ENCODE measurements at regions of chr17 and their contacts with region 1.

Region 1: DNA sequence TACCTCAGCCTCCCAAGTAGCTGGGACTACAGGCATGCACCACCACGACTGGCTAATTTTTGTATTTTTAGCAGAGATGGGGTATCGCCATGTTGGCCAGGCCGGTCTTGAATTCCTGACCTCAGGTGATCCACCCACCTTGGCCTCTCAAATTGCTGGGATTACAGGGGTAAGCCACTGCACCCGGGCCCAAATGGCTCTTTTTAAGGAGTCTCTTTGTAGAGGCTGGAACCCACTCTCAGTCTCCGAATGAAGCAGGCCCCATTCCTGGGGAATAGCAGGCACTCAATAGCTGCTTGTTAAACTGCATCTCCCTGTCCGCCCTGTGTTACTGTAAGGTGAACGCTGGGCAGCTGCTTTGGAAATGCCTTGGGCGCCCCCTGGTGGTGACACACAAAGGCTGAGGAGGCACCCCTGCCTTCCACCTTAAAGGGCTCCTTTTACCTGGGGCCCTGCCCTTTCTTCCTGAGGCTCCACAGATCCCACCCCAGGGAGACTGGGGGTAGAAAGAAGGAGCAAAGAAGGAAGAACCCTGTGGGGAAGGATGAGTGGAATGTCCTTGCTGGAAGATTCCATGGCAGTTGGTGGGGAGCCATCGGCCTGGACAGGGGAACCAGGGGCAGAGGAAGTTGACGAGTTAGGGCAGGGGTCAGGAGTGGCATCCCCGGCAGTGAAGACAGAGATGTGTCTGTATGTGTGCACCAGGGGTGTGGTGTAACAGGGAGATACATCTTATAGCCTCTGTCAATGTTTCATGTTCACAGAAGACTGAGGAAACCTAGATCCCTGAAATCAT is 6.1 kb upstream of the SP2 start:
- DNase-seq: peak; percentile 71 to 95 (median 87)
- ATAC-seq: peak; percentile 93 to 97 (median 96)
- H3K4me3 ChIP-seq: no peak overlapping the region
- H3K4me3 Mint-ChIP-seq: no peak overlapping the region
- H3K27ac ChIP-seq: no peak overlapping the region
- H3K27ac Mint-ChIP-seq: peak overlapping the region in 1 of 2 donors; percentile 49
- H3K4me1 ChIP-seq: peaks cover 12 to 19% of the 10 kb centered on the region in 2 experiments
- H3K4me1 Mint-ChIP-seq: peaks cover 26 to 31% (median 29%) of the 10 kb centered on the region in 3 donors
- H3K27me3 ChIP-seq: peaks cover 0 to 8% of the 10 kb centered on the region in 2 experiments
- H3K27me3 Mint-ChIP-seq: no peaks in the 10 kb centered on the region

Region 2: DNA sequence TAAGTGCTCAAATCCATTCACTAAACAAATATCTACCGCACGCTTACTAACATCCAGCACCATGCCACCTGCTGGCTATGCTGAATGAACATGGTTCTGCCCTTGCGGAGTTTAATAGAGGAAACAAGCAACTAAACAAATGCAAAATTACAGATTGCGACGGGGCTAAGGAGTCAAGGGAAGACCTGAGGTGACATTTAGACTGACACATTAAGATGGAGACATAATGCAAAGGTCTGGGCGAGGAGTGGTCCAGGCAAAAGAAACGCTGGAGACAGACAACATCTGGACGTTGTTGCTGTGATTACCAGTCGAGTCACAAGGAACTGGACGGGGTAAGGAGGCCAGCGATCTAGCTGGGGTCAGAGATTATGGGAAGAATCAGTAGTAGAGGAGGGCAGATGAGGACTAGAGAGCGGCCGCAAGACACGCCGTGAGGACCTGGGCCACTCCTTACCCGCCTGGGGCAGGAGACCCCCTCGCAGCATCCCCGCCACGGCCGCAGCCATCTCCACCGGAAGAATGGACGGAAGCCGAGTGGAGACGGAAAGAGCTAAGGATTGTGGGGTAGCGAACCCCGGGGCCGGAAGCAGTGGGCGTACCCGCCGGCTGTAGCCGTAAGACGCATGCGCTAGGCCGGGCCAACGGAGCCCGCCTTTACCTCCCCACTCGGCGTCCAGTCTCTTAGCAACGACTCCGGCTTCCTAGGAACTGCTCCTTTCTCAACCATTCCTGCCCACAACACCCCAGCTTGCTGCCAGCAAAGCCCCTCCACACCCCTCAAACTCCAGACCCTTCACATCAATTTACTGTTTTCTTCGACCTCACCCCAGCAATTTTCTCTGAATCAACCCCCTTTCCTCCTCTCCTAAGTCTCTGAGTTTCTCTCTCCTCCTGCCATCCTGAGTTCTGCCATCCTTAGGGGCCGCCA is 58.7 kb before region 1 on chr17 and contains the starts of genes LRRC46 and MRPL10:
- CTCF ChIA-PET with region 1: interaction called in 1 of 2 experiments, 11 read pairs
- POLR2A ChIA-PET with region 1: no interaction called
- DNase-seq: peak; percentile 78 to 95 (median 87)
- ATAC-seq: peak; percentile 82 to 89 (median 87)
- H3K4me3 ChIP-seq: peak within 1 kb of the TSS; percentile 97 to 98
- H3K4me3 Mint-ChIP-seq: peak within 1 kb of the TSS; percentile 92 to 98 (median 94)
- H3K27ac ChIP-seq: peak within 1 kb of the TSS; percentile 99
- H3K27ac Mint-ChIP-seq: peak within 1 kb of the TSS; percentile 96 to 98
- H3K4me1 ChIP-seq: peaks cover 18 to 73% of the 10 kb centered on the region in 2 experiments
- H3K4me1 Mint-ChIP-seq: peaks cover 51 to 69% (median 61%) of the 10 kb centered on the region in 3 donors
- H3K27me3 ChIP-seq: no peaks in the 10 kb centered on the region
- H3K27me3 Mint-ChIP-seq: no peaks in the 10 kb centered on the region
- total RNA-seq, gene LRRC46: 0.20 to 1.0 (median 0.88) TPM
- total RNA-seq, gene MRPL10: 34.1 to 60.1 (median 41.6) TPM

Region 3: DNA sequence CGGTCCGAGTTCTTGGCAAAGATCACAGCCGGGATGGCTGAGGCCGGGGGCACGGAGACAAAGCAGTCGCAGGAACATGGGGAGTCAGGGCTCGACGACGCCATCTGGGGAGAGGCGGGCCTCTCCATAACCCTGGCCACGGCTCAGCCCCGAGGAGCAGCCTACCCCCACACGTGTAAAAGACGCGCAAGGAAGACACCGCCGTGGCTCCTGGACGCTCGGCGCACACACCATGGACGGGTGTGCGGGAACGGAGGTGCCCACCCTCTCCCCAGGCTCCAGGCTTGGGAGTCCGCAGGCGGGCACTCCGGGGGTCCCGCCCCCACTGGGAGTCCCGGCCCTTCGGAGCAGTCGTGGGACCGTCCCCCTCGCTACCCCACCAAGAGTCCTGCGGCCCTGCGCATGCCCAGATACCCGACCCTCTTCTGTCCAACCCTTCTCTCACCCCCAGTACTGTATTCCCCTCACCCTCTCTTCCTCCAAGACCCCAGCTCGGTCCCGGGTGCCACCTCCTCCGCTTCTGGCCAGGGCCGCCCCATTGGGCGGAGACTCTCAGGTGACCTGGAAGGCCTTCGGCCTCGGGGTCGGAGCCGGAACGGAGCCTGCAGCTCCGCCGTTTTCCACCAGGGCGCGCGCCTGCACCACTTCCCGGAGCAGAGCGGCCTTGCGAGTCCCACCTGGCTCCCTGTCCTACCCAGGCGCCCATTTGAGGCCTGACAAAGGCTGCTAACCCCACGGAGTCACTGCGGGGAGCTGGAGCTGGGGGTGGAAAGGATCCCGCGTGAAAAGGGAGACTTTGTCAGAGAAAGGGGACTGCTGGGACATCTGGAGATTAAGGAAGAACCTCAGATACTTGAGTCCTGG is 49.0 kb before region 1 on chr17 and contains the start of gene SCRN2:
- CTCF ChIA-PET with region 1: interaction called, 5 to 27 read pairs
- POLR2A ChIA-PET with region 1: interaction called, 4 to 5 read pairs
- DNase-seq: peak; percentile 53 to 89 (median 75)
- ATAC-seq: peak; percentile 89 to 93 (median 90)
- H3K4me3 ChIP-seq: peak within 1 kb of the TSS; percentile 72 to 94
- H3K4me3 Mint-ChIP-seq: peak within 1 kb of the TSS; percentile 94 to 96 (median 96)
- H3K27ac ChIP-seq: peak within 1 kb of the TSS; percentile 60
- H3K27ac Mint-ChIP-seq: peak within 1 kb of the TSS; percentile 85 to 93
- H3K4me1 ChIP-seq: peaks cover 3 to 22% of the 10 kb centered on the region in 2 experiments
- H3K4me1 Mint-ChIP-seq: peaks cover 30 to 34% (median 31%) of the 10 kb centered on the region in 3 donors
- H3K27me3 ChIP-seq: peaks cover 5 to 24% of the 10 kb centered on the region in 2 experiments
- H3K27me3 Mint-ChIP-seq: peaks cover 16 to 21% of the 10 kb centered on the region in 2 donors
- total RNA-seq, gene SCRN2: 27.0 to 44.3 (median 40.6) TPM